Posterior vena cava (tissue), 2 donors: ENCODE measurements at regions of chr13 and their contacts with region 1.

Region 1: GRCh38 chr13:100235311-100235901 is 146.5 kb downstream of the PCCA start:
- DNase-seq: no peak

Region 2: GRCh38 chr13:99656092-99656745 is 579.2 kb before region 1 on chr13:
- intact Hi-C with region 1: loop called (anchors 10 kb)
- DNase-seq: no peak

Region 3: DNA sequence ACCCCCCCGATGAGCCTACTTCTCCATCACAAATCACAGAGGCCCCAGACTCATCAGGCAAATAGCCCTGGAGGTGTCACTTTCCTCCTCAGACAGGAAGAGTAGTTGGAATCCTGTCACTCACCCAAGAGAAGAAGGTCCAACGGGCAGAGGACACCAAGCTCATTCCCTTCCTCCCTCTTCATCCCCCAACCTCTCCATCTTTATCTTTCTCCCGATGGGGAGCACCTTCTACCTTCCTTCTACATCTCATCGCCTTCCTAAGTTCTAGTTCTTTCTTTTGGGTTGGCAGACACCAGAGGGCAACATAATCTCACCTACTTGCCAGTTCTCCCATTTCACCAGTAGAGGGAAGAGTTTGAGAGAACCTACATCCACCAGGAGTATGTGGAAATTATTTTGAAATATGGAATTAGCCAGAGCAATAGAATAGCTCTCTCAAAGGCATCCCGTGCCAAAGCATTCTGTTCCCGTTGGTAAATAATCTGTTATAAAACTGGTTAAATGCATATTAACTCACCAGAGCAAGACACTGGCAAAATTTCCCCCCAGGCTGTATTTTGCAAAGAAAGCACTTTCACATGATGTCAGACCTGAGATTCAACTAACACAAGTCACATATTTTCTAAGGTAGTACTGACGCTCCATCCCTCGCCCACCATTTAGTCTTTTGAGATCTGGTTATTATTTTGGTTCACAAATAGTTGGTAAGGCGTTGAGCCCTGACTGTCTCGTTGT is 318.9 kb before region 1 on chr13:
- intact Hi-C with region 1: loop called (anchors 10 kb)
- DNase-seq: no peak

Region 4: GRCh38 chr13:99959538-99960230 is 275.7 kb before region 1 on chr13:
- intact Hi-C with region 1: no loop called
- DNase-seq: peak; percentile 66

Region 5: DNA sequence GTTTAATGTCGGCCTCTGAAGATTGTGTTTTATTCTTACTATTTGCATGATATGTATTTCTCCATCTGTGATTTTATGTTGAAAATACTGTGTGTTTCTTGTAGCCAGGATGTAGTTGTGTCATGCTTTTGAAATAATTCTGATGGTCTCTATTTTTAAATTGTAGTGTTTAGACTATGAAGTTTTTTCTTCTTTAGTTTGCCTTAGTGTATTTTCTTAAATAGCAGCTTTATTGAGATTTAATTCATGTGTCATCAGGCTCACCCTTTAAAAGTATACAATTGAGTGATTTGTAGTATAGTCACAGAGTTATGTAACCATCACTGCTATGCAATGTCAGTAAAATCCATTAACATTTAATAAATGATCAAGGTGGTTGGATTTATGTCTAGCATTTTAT is 72.0 kb before region 1 on chr13:
- intact Hi-C with region 1: no loop called
- DNase-seq: no peak